Right lobe of liver (tissue), 6 donors: ENCODE measurements at regions of chr7 and their contacts with region 1.

Region 1: DNA sequence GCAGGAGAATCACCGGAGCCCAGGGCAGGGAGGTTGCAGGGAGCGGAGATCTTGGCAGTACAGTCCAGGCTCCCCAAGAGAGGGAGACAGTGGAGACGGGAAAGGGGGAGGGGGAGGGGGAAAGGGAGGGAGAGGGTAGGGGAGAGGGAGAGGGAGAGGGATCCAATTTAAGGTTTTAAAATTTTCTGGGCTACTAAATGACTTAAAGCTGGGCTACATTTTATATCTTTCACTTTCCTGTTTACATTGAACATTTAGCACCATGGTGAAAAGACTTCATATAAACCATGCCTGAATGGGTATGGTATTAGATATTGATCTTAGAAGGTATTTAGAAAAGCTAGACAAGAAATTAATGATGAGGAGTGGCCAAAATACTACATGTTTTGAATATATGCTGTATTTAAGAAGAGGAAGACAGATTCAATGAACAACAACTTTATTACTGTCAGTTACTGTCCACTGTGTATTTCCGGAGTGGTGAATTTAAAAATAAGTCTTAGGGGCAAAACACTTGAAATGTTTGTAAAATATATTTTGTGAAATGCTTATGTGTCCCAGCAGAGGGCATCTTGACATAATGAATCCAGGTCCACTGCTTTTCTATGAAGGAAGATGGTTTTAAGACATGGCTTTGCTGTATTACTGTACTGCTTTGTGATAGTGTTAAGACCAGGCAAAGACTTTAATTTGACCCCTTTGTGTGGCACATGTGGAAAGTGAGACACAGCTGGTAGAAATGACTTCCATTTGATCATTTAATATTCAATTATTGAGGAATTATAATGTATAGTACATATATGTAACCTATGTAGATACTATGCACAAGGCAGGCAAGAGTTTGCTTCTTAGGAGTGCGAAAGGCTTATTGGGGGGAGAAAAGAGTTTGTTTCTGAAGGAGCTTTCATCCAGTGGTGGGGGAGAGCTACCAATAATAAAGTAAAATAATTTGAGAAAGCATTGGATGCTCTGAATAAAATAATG is 52.8 kb downstream of the NRF1 start:
- DNase-seq: no peak
- ATAC-seq: peak; percentile 47 to 71 (median 56)
- H3K4me3 ChIP-seq: no peak overlapping the region
- H3K27ac ChIP-seq: no peak overlapping the region
- H3K4me1 ChIP-seq: no peaks in the 10 kb centered on the region
- H3K27me3 ChIP-seq: no peaks in the 10 kb centered on the region
- CTCF ChIP-seq: peak; percentile 35 to 52 (median 42)
- POLR2A ChIP-seq: no peak

Region 2: GRCh38 chr7:130010689-130011412 is 346.5 kb after region 1 on chr7:
- intact Hi-C with region 1: loop called in 1 of 2 experiments (anchors 10 kb)
- DNase-seq: peak; percentile 59 to 73 (median 60)
- ATAC-seq: peak; percentile 86 to 97 (median 90)
- H3K4me3 ChIP-seq: no peak overlapping the region
- H3K27ac ChIP-seq: no peak overlapping the region
- H3K4me1 ChIP-seq: no peaks in the 10 kb centered on the region
- H3K27me3 ChIP-seq: no peaks in the 10 kb centered on the region
- CTCF ChIP-seq: peak; percentile 82 to 92 (median 87)
- POLR2A ChIP-seq: no peak